ENCODE measurements at regions of chr7 and their contacts with region 1.

Region 1: GRCh38 chr7:100132697-100133151 is 6.0 kb downstream of the MBLAC1 start:
- DNase-seq: peak; percentile 42
- H3K4me3 ChIP-seq: no peak overlapping the region
- H3K27ac ChIP-seq: no peak overlapping the region
- H3K4me1 ChIP-seq: peaks cover 4% of the 10 kb centered on the region
- H3K27me3 ChIP-seq: no peaks in the 10 kb centered on the region
- CTCF ChIP-seq: peak; percentile 91 to 97

Region 2: GRCh38 chr7:99990460-99990852 is 142.3 kb before region 1 on chr7:
- CTCF ChIA-PET with region 1: no interaction called
- dilution Hi-C with region 1: no loop called
- in situ Hi-C with region 1: loop called in 1 of 2 experiments (anchors 5 kb)
- intact Hi-C with region 1: loop called (anchors 1 kb)
- DNase-seq: no peak
- H3K4me3 ChIP-seq: no peak overlapping the region
- H3K27ac ChIP-seq: no peak overlapping the region
- H3K4me1 ChIP-seq: peaks cover 5% of the 10 kb centered on the region
- H3K27me3 ChIP-seq: no peaks in the 10 kb centered on the region
- CTCF ChIP-seq: no peak

Region 3: GRCh38 chr7:100215895-100216294 is 83.2 kb after region 1 on chr7:
- CTCF ChIA-PET with region 1: interaction called, 6 read pairs
- dilution Hi-C with region 1: no loop called
- in situ Hi-C with region 1: loop called (anchors 5 to 10 kb)
- intact Hi-C with region 1: loop called (anchors 1 kb)
- DNase-seq: no peak
- H3K4me3 ChIP-seq: no peak overlapping the region
- H3K27ac ChIP-seq: no peak overlapping the region
- H3K4me1 ChIP-seq: no peaks in the 10 kb centered on the region
- H3K27me3 ChIP-seq: no peaks in the 10 kb centered on the region
- CTCF ChIP-seq: no peak

Region 4: DNA sequence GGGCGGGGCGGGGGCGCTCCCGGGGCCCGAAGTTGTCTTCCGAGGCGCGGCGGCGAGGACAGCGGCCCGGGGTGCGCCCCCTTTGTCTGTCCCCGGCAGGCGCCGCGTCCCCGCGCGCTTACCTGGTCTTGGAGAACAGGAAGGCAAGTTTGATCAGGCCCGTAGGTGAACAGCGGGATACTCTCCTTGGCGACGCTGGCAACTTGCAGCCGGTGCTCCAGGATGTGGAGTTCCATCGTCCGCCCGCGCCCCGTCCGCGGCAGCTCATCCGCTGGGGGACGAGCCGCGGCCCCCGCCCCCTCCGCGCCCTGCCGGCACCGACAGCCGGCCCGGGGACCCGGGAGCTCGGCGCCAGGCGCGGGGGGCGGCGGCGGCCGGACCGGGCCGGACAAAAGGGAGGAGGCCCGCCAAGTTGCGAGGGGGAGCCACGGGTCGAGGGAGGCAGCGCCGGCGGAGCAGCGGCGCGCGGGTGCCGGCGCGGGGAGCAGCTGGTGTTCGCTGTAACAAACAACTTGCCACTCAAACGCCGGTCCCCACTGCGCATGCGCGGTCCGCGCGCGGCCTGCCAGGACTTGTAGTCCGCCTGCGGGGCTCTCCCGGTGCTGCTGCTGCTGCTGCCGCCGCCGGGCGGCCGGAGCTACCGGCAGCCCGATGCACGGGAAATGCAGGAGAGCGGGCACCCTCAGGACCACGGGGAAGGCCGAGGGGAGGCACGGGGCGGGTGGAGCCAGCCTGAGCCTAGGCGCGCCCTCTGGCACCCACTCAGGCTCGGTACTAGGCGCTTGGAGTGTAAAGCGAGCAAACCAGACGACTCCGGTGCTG is 139.2 kb after region 1 on chr7:
- CTCF ChIA-PET with region 1: no interaction called
- dilution Hi-C with region 1: no loop called
- in situ Hi-C with region 1: no loop called
- intact Hi-C with region 1: loop called (anchors 5 kb)
- DNase-seq: peak; percentile 91
- H3K4me3 ChIP-seq: peak overlapping the region; percentile 36 to 62 (median 61)
- H3K27ac ChIP-seq: no peak overlapping the region
- H3K4me1 ChIP-seq: peaks cover 3% of the 10 kb centered on the region
- H3K27me3 ChIP-seq: no peaks in the 10 kb centered on the region
- CTCF ChIP-seq: peak; percentile 12 to 51

Region 5: DNA sequence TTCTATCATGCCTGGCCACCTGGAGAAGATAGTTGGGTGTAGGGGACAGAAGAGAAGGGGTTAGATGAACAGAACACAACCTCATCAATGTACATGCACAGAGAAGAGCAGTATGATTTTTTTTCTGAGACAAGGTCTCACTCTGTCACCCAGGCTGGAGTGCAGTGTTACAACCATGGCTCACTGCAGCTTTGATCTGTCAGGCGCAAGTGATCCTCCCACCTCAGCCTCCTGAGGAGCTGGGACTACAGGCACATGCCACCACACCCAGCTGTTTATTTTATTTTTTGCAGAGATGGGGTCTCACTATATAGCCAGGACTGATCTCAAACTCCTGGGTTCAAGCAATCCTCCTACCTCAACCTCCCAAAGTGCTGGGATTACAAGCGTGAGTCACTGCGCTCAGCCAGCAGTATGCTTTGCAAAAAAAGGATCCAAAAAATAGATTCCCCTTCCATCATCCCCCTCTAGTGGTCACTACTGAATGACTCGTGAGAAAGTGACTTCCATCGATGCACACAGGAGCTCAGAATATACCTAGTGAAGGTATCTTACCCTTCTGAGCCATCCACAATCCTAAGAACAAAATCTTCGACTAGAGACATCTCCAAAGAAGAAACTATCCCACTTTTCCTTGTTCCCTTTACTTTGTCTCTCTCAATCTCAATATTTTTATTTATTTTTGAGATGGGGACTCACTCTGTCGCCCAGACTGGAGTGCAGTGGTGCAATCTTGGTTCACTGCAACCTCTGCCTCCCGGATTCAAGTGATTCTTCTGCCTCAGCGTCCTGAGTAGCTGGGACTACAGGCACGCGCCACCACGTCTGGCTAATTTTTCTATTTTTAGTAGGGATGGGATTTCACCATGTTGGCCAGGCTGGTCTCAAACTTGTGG is 274.8 kb after region 1 on chr7:
- CTCF ChIA-PET with region 1: no interaction called
- dilution Hi-C with region 1: no loop called
- in situ Hi-C with region 1: no loop called
- intact Hi-C with region 1: loop called (anchors 1 kb)
- DNase-seq: peak; percentile 66
- H3K4me3 ChIP-seq: no peak overlapping the region
- H3K27ac ChIP-seq: no peak overlapping the region
- H3K4me1 ChIP-seq: peaks cover 14% of the 10 kb centered on the region
- H3K27me3 ChIP-seq: no peaks in the 10 kb centered on the region
- CTCF ChIP-seq: peak; percentile 64 to 65

Region 6: GRCh38 chr7:100428967-100429636 is 296.4 kb after region 1 on chr7:
- CTCF ChIA-PET with region 1: no interaction called
- dilution Hi-C with region 1: no loop called
- in situ Hi-C with region 1: no loop called
- intact Hi-C with region 1: no loop called
- DNase-seq: peak; percentile 99
- H3K4me3 ChIP-seq: peak overlapping the region; percentile 83 to 91 (median 84)
- H3K27ac ChIP-seq: peak overlapping the region; percentile 95
- H3K4me1 ChIP-seq: peaks cover 20% of the 10 kb centered on the region
- H3K27me3 ChIP-seq: no peaks in the 10 kb centered on the region
- CTCF ChIP-seq: no peak

Measured in mammary epithelial cell (primary cell).